Caco-2 (cell line): ENCODE measurements at regions of chr6 and their contacts with region 1.

Region 1: GRCh38 chr6:168686831-168687730 is 246.1 kb downstream of the SMOC2 start:
- DNase-seq: peak; percentile 63 to 76
- H3K4me3 ChIP-seq: no peak overlapping the region
- H3K4me3 Mint-ChIP-seq: peak overlapping the region; percentile 49
- H3K27ac Mint-ChIP-seq: peak overlapping the region; percentile 86
- H3K4me1 ChIP-seq: peaks cover 37% of the 10 kb centered on the region
- H3K4me1 Mint-ChIP-seq: peaks cover 22% of the 10 kb centered on the region
- H3K27me3 ChIP-seq: no peaks in the 10 kb centered on the region
- H3K27me3 Mint-ChIP-seq: no peaks in the 10 kb centered on the region
- CTCF ChIP-seq: no peak

Region 2: DNA sequence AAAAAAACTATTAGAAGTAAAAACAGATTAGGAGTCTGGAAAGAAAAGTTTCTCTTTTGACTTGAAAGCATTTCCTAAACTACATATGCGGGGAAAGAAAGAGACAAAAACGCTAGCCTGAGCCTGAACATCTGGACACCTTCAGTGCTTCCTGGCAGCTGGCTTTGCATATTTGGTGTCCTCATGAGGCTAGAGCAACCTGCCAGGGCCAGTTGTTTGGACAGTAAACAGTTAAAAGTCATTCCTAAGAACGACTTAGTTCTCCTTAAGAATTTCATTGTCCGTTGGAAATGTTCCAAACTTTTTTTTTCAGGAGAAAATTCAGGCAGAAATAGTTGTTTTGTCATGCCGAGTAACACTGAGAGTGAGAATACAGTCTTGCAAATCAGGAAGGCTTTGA is 46.3 kb before region 1 on chr6:
- CTCF ChIA-PET with region 1: no interaction called
- POLR2A ChIA-PET with region 1: no interaction called
- intact Hi-C with region 1: loop called (anchors 1 kb)
- DNase-seq: no peak
- H3K4me3 ChIP-seq: no peak overlapping the region
- H3K4me3 Mint-ChIP-seq: peak overlapping the region; percentile 9
- H3K27ac Mint-ChIP-seq: peak overlapping the region; percentile 72
- H3K4me1 ChIP-seq: peaks cover 27% of the 10 kb centered on the region
- H3K4me1 Mint-ChIP-seq: peaks cover 22% of the 10 kb centered on the region
- H3K27me3 ChIP-seq: no peaks in the 10 kb centered on the region
- H3K27me3 Mint-ChIP-seq: no peaks in the 10 kb centered on the region
- CTCF ChIP-seq: no peak

Region 3: DNA sequence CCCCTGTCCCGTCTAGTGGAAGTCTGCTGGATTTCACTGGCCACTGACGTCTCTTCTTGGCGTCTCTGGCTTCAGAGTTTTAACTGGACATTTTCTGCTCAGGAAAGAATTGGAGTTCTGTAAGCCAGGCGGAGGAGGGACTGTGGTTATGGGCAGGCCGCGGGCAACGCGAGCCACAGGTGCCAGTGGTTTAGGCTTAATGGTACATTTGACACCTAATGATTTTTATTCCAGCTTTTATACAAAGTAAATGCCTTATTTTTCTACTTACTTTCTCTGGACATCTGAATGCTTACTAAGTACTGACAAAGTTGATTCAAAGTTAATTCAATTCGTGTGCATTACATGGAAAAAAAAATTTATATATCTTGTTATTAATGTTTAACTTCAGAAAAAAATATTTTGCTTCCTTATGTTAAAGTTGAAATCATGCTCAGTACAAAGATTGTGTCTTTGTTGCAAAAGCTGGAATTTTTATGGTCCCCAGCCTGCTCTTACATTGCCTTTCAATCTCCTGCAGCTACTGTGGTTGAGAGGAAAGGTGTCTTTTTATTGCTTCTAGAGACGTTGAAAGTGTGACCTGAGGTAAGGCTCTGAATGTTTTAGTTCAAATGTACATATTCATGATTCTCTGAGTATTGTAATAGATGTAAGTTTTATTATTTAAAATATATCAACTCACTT is 15.1 kb before region 1 on chr6:
- CTCF ChIA-PET with region 1: no interaction called
- POLR2A ChIA-PET with region 1: no interaction called
- intact Hi-C with region 1: loop called (anchors 2 kb)
- DNase-seq: peak in 1 of 2 experiments; percentile 51
- H3K4me3 ChIP-seq: no peak overlapping the region
- H3K4me3 Mint-ChIP-seq: no peak overlapping the region
- H3K27ac Mint-ChIP-seq: peak overlapping the region; percentile 72
- H3K4me1 ChIP-seq: peaks cover 24% of the 10 kb centered on the region
- H3K4me1 Mint-ChIP-seq: peaks cover 19% of the 10 kb centered on the region
- H3K27me3 ChIP-seq: no peaks in the 10 kb centered on the region
- H3K27me3 Mint-ChIP-seq: no peaks in the 10 kb centered on the region
- CTCF ChIP-seq: no peak

Region 4: GRCh38 chr6:168908887-168909286 is 221.8 kb after region 1 on chr6:
- CTCF ChIA-PET with region 1: no interaction called
- POLR2A ChIA-PET with region 1: no interaction called
- intact Hi-C with region 1: no loop called
- DNase-seq: no peak
- H3K4me3 ChIP-seq: no peak overlapping the region
- H3K4me3 Mint-ChIP-seq: no peak overlapping the region
- H3K27ac Mint-ChIP-seq: no peak overlapping the region
- H3K4me1 ChIP-seq: no peaks in the 10 kb centered on the region
- H3K4me1 Mint-ChIP-seq: peaks cover 10% of the 10 kb centered on the region
- H3K27me3 ChIP-seq: no peaks in the 10 kb centered on the region
- H3K27me3 Mint-ChIP-seq: no peaks in the 10 kb centered on the region
- CTCF ChIP-seq: peak in 1 of 2 experiments; percentile 11